ENCODE measurements at regions of chr14 and their contacts with region 1.

Region 1: GRCh38 chr14:91323671-91324605 is 79.4 kb upstream of the GPR68 start:
- DNase-seq: peak; percentile 88 to 96 (median 93)
- ATAC-seq: peak; percentile 77 to 85
- H3K4me3 Mint-ChIP-seq: peak overlapping the region; percentile 72 to 96 (median 83)
- H3K27ac Mint-ChIP-seq: peak overlapping the region; percentile 95 to 99 (median 98)
- H3K4me1 Mint-ChIP-seq: peaks cover 50 to 89% (median 86%) of the 10 kb centered on the region in 4 donors
- H3K27me3 Mint-ChIP-seq: no peaks in the 10 kb centered on the region

Region 2: DNA sequence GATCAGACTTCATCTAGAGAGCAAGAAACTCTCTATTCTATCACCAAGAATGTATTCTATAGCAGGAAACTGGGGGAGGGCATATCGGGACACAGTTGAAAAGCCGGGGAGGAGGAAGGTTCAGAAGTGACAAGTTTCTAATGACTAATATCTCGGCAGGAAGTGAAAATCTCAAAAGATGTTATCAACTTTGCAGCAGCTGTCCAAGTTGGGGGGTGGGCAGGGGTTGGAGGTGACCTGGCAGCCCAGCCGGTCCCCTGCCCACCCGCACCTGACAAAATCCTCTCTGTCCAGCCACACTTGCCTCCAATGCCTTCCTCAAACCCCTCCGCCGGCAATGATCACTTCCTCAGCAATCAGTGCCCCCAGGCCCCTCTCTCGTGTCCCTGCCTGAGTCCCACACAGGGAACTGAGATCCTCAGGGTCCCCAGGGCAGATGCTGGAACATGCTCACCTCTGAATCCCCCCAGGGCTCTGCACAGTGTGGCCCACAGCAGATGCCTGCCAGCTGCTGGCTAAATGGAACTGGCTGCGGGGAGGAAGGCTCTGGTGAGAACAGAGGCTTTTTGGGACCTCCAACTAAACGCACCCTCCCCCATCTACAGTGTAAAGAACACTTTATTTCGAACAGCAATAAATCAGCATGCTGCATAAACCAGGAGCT is 49.8 kb after region 1 on chr14:
- POLR2A ChIA-PET with region 1: interaction called, 52 read pairs
- DNase-seq: peak in 4 of 10 donors; percentile 45 to 57 (median 52)
- ATAC-seq: peak; percentile 33 to 51
- H3K4me3 Mint-ChIP-seq: peak overlapping the region; percentile 76 to 96 (median 85)
- H3K27ac Mint-ChIP-seq: peak overlapping the region; percentile 85 to 98 (median 94)
- H3K4me1 Mint-ChIP-seq: peaks cover 67 to 99% (median 99%) of the 10 kb centered on the region in 4 donors
- H3K27me3 Mint-ChIP-seq: no peaks in the 10 kb centered on the region

Region 3: GRCh38 chr14:91402771-91403600 is 79.0 kb after region 1 on chr14:
- POLR2A ChIA-PET with region 1: interaction called, 30 read pairs
- DNase-seq: peak in 5 of 10 donors; percentile 32 to 59 (median 52)
- ATAC-seq: peak; percentile 7 to 32
- H3K4me3 Mint-ChIP-seq: peak overlapping the region; percentile 75 to 88 (median 84)
- H3K27ac Mint-ChIP-seq: peak overlapping the region; percentile 91 to 99 (median 98)
- H3K4me1 Mint-ChIP-seq: peaks cover 49 to 99% (median 95%) of the 10 kb centered on the region in 4 donors
- H3K27me3 Mint-ChIP-seq: no peaks in the 10 kb centered on the region

Region 4: GRCh38 chr14:91409928-91410718 is 86.2 kb after region 1 on chr14:
- POLR2A ChIA-PET with region 1: interaction called, 408 read pairs
- DNase-seq: peak in 1 of 10 donors; percentile 45
- ATAC-seq: peak; percentile 32 to 42
- H3K4me3 Mint-ChIP-seq: peak overlapping the region; percentile 68 to 98 (median 86)
- H3K27ac Mint-ChIP-seq: peak overlapping the region; percentile 91 to 99 (median 98)
- H3K4me1 Mint-ChIP-seq: peaks cover 59 to 95% (median 91%) of the 10 kb centered on the region in 4 donors
- H3K27me3 Mint-ChIP-seq: no peaks in the 10 kb centered on the region

Region 5: GRCh38 chr14:91418387-91419043 is 94.6 kb after region 1 on chr14:
- POLR2A ChIA-PET with region 1: interaction called, 408 read pairs
- DNase-seq: peak in 9 of 10 donors; percentile 65 to 88 (median 79)
- ATAC-seq: peak; percentile 11 to 23
- H3K4me3 Mint-ChIP-seq: peak overlapping the region; percentile 78 to 98 (median 86)
- H3K27ac Mint-ChIP-seq: peak overlapping the region; percentile 84 to 98 (median 93)
- H3K4me1 Mint-ChIP-seq: peaks cover 19 to 56% (median 39%) of the 10 kb centered on the region in 4 donors
- H3K27me3 Mint-ChIP-seq: peaks cover 0 to 2% (median 0%) of the 10 kb centered on the region in 5 donors

Region 6: GRCh38 chr14:91521061-91521640 is 197.2 kb after region 1 on chr14:
- POLR2A ChIA-PET with region 1: no interaction called
- DNase-seq: no peak
- ATAC-seq: no peak
- H3K4me3 Mint-ChIP-seq: no peak overlapping the region
- H3K27ac Mint-ChIP-seq: no peak overlapping the region
- H3K4me1 Mint-ChIP-seq: no peaks in the 10 kb centered on the region
- H3K27me3 Mint-ChIP-seq: peaks cover 0 to 7% (median 0%) of the 10 kb centered on the region in 5 donors

Measured in naive thymus-derived CD8-positive, alpha-beta T cell (primary cell).